A549 (cell line): ENCODE measurements at regions of chr5 and their contacts with region 1.

Region 1: GRCh38 chr5:172932313-172933017 is 26.8 kb upstream of the RPL26L1 start:
- DNase-seq: peak; percentile 76 to 86
- ATAC-seq: peak; percentile 66 to 81
- H3K4me3 ChIP-seq: no peak overlapping the region
- H3K27ac ChIP-seq: peak overlapping the region; percentile 98 to 100
- H3K4me1 ChIP-seq: peaks cover 47% of the 10 kb centered on the region
- CTCF ChIP-seq: peak; percentile 89
- EP300 ChIP-seq: no peak
- POLR2A ChIP-seq: no peak
- RAD21 ChIP-seq: peak; percentile 92 to 97

Region 2: GRCh38 chr5:172722131-172722815 is 210.2 kb before region 1 on chr5:
- CTCF ChIA-PET with region 1: interaction called, 106 read pairs
- POLR2A ChIA-PET with region 1: interaction called, 4 read pairs
- DNase-seq: no peak
- ATAC-seq: no peak
- H3K4me3 ChIP-seq: no peak overlapping the region
- H3K27ac ChIP-seq: peak overlapping the region in 1 of 2 experiments; percentile 68; a peak in 3 of 6 replicates
- H3K4me1 ChIP-seq: peaks cover 13% of the 10 kb centered on the region
- CTCF ChIP-seq: no peak
- EP300 ChIP-seq: no peak
- POLR2A ChIP-seq: no peak
- RAD21 ChIP-seq: no peak

Region 3: DNA sequence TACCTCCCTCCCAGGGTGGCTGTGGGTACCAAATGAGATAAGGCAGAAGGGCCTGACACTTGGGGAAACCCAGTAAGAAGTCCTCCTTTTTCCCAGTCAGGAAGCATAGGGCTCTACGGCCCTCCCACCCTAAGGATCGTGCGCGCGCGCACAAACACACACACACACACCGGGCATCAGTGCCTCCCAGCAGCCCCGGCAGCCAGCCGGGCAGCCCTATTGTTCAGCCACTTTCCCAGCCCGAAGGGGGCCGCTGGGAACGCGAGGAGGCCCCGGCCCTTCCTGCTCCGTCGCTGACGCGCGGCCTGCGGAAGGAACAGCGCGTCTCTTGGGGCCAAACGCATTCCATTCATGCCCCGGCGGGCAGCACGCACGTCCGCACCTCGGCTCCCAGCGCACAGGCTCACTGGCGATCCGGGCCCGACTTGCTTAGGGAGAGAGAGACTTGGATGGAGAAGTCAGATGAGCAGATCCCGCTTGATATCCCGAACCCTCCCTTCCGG is 184.1 kb before region 1 on chr5:
- CTCF ChIA-PET with region 1: interaction called, 10 read pairs
- POLR2A ChIA-PET with region 1: no interaction called
- DNase-seq: no peak
- ATAC-seq: no peak
- H3K4me3 ChIP-seq: no peak overlapping the region
- H3K27ac ChIP-seq: no peak overlapping the region
- H3K4me1 ChIP-seq: no peaks in the 10 kb centered on the region
- CTCF ChIP-seq: no peak
- EP300 ChIP-seq: no peak
- POLR2A ChIP-seq: no peak
- RAD21 ChIP-seq: no peak

Region 4: GRCh38 chr5:172902497-172903200 is 29.8 kb before region 1 on chr5:
- CTCF ChIA-PET with region 1: interaction called, 125 read pairs
- POLR2A ChIA-PET with region 1: interaction called, 12 read pairs
- DNase-seq: peak; percentile 82 to 99
- ATAC-seq: peak; percentile 48 to 65
- H3K4me3 ChIP-seq: no peak overlapping the region
- H3K27ac ChIP-seq: peak overlapping the region; percentile 99 to 100
- H3K4me1 ChIP-seq: peaks cover 98% of the 10 kb centered on the region
- CTCF ChIP-seq: peak; percentile 60
- EP300 ChIP-seq: peak; percentile 99 to 100; a peak in 4 of 5 replicates
- POLR2A ChIP-seq: no peak
- RAD21 ChIP-seq: peak; percentile 78 to 90

Region 5: DNA sequence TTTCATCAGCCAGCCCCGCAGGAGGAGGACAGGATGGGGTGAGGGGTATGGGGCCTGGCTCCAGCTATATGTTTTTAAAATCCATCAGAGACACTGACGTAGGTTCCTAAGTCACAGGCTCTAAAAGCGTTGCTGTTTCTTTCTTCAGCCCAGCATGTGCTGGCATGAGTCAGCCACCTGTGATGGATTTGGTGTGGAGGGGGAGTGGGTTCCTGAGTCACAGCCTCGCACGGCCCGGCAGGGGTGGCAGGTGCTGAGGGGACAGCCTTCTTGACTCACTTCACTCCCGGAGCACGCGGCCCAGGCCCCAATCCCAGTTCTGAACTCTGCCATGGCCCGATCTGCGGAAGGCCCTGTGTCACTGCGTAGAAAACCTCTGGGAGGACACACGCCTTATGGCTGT is 12.0 kb before region 1 on chr5:
- CTCF ChIA-PET with region 1: interaction called, 29 read pairs
- POLR2A ChIA-PET with region 1: interaction called, 8 read pairs
- DNase-seq: peak; percentile 95 to 97
- ATAC-seq: peak; percentile 84 to 87
- H3K4me3 ChIP-seq: no peak overlapping the region
- H3K27ac ChIP-seq: peak overlapping the region; percentile 98 to 100
- H3K4me1 ChIP-seq: peaks cover 68% of the 10 kb centered on the region
- CTCF ChIP-seq: no peak
- EP300 ChIP-seq: peak; percentile 100
- POLR2A ChIP-seq: no peak
- RAD21 ChIP-seq: peak in 1 of 2 experiments; percentile 67; a peak in 2 of 5 replicates

Region 6: DNA sequence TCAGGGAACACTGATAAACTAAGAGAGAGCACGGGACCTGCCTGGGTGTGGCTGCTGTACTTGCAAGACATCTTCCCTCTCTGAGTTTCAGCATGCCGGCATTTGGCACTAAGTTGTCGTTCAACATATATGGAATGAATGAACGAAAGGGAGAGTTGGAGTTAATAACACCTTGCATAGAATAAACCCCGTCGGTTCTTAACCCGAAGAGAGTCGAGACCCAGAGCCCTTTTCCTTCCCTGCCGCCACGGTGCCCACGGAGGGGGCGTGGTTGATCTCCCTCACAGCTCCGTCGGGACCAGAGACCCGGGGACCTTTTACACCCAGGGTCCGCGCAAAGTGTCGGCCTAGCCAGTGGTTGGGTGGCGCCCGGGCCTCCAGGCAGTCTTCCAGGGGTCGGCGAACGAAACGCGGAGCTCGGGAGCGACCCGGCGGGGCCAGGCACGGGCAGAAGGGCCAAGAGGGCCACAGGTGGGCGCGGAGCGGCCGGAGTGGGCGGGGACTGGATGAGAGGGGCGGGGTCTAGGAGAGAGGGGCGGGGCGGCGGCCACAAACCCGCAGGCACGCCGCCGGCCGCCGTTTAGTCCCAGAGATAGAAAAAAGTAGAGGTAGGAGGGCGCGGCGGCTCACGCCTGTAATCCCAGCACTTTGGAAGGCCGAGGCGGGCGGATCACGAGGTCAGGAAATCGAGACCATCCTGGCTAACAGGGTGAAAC is 26.0 kb after region 1 on chr5:
- CTCF ChIA-PET with region 1: interaction called, 34 read pairs
- POLR2A ChIA-PET with region 1: interaction called, 4 read pairs
- DNase-seq: peak; percentile 66 to 84
- ATAC-seq: peak; percentile 77 to 78
- H3K4me3 ChIP-seq: peak overlapping the region; percentile 65
- H3K27ac ChIP-seq: peak overlapping the region; percentile 94 to 95
- H3K4me1 ChIP-seq: peaks cover 57% of the 10 kb centered on the region
- CTCF ChIP-seq: no peak
- EP300 ChIP-seq: no peak
- POLR2A ChIP-seq: no peak
- RAD21 ChIP-seq: no peak; a peak in 1 of 5 replicates